Heart left ventricle (tissue), 16 donors: ENCODE measurements at regions of chr10 and their contacts with region 1.

Region 1: DNA sequence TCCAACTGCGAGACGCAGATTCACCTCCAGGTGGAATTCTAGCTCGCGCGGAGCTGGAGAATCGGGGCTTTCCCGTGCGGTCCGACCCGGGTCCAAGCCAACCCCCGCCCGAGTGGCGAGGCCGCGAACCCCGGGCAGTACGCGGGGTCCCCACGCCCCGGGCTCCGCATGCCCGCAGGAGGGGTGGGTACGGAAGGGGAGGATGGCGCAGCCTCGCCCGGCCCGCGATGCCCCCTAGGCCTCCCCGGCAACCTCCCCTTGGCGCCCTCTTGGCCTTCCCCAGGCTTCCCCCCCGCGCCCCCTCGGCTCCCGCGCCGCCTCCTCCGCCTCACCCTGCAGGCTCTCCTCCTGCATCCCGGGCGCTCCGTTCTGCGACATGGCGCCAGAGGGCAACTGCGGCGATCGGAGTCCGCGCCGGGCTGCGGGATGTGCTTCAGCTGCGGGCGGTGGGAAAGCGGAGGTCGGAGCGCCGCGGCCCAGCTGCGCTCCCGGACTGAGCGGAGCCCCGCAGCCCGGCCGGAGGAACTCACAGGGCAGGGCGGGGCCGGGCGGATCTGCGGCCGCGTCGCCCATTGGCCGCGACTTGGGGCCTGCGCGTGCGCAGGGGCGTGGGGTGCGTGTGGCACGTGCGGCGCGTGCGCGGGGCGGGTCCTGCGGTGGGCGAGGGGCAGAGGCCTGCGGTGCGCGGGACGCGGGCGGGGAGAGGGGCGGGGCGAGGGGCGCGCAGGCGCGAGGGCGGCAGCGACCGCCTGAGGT is at the start of gene BNIP3:
- DNase-seq: peak; percentile 95 to 99 (median 96)
- ATAC-seq: peak; percentile 89 to 95 (median 92)
- H3K4me3 ChIP-seq: peak within 1 kb of the TSS; percentile 72 to 99 (median 90)
- H3K27ac ChIP-seq: peak within 1 kb of the TSS; percentile 6 to 90 (median 80)
- H3K4me1 ChIP-seq: peaks cover 0 to 51% (median 28%) of the 10 kb centered on the region in 12 donors
- H3K27me3 ChIP-seq: peaks cover 0 to 9% (median 0%) of the 10 kb centered on the region in 9 donors
- CTCF ChIP-seq: peak in 1 of 12 donors; percentile 14
- POLR2A ChIP-seq: peak; percentile 95 to 99
- total RNA-seq, gene BNIP3: 97.1 to 711 (median 130) TPM

Region 2: DNA sequence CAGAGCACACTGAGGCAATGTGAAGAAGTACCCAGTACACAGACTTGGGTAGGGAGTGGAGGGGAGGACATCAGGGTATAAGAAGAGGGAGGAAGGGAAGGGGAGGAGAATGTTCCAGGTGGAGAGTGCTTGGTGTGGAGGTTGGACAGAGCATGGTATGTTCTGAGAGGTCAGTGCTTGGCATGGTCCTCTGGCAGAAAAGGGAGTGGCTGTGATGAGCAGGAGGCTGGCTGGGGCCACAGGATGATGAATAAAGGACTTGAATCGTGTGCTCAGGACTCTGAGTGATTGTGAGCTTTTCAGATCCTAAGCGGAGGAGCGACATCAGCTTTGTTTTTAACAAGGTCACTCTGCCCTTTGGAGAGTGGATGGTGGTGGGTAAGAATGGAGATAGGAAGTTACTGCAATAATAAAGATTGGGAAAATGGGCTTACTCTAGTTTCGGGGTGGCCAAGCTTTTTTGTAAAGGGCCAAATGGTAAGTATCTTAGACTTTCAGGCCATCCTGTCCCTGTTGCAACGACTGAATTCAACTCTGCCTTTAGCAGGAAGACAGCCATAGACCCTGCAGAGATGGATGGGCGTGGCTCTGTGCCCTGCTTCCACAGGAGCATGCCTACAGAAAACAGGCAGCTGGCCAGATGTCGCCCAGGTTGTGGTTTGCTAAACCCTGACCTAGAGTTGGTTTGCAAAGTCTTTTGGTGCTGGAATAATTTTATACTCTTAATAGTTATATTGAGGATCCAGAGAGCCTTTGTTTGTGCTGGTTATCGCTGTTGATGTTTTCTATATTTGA is 72.4 kb before region 1 on chr10:
- intact Hi-C with region 1: loop called in 6 of 10 experiments (anchors 5 to 10 kb)
- DNase-seq: no peak
- ATAC-seq: peak in 3 of 4 donors; percentile 33 to 38 (median 34)
- H3K4me3 ChIP-seq: no peak overlapping the region
- H3K27ac ChIP-seq: no peak overlapping the region
- H3K4me1 ChIP-seq: peaks cover 0 to 79% (median 48%) of the 10 kb centered on the region in 12 donors
- H3K27me3 ChIP-seq: no peaks in the 10 kb centered on the region
- CTCF ChIP-seq: no peak
- POLR2A ChIP-seq: no peak

Region 3: GRCh38 chr10:131997366-131998049 is 15.9 kb after region 1 on chr10:
- intact Hi-C with region 1: loop called in 1 of 10 experiments (anchors 2 kb)
- DNase-seq: peak in 2 of 5 donors; percentile 72 to 77
- ATAC-seq: peak; percentile 40 to 76 (median 57)
- H3K4me3 ChIP-seq: no peak overlapping the region
- H3K27ac ChIP-seq: peak overlapping the region; percentile 20 to 90 (median 69)
- H3K4me1 ChIP-seq: peaks cover 0 to 43% (median 22%) of the 10 kb centered on the region in 12 donors
- H3K27me3 ChIP-seq: no peaks in the 10 kb centered on the region
- CTCF ChIP-seq: no peak
- POLR2A ChIP-seq: no peak

Region 4: DNA sequence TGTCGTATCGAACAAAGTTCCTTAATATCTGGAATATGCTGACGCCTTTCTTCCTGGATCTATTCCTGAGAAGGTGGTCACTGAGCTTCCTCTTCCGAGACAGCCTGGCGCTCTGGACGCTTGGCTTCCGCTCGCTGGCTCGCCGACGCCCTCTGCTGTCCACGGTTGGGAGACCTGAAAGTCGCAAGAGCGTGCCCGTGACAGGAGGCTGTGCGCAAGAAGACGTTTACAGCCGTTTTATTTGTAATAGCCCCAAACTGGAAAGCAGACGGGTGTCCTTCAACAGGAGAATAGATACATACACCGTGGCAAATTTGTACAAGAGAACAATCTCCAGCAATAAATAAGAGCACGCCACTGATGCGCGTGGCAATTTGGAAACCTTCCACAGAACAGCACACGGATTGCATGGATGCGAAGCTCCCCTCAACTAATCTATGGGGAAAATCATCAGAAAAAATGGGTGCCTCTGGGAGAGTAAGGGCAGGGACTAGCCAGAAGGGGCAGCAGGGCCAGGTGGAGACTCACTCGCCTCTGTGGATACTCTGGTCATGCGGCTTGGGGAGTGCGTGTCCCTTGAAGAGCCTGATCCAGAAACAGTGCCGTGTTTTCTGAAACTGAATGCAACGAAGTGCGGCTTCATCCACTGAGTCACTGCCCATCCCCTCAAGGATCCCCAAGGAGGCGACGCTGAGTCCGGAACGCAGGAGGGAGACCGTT is 41.6 kb after region 1 on chr10:
- intact Hi-C with region 1: loop called in 3 of 10 experiments (anchors 2 to 5 kb)
- DNase-seq: peak; percentile 74 to 90 (median 80)
- ATAC-seq: peak; percentile 75 to 97 (median 87)
- H3K4me3 ChIP-seq: peak overlapping the region in 11 of 12 donors; percentile 9 to 53 (median 36)
- H3K27ac ChIP-seq: no peak overlapping the region
- H3K4me1 ChIP-seq: peaks cover 0 to 11% (median 4%) of the 10 kb centered on the region in 12 donors
- H3K27me3 ChIP-seq: peaks cover 0 to 27% (median 4%) of the 10 kb centered on the region in 9 donors
- CTCF ChIP-seq: peak; percentile 85 to 98 (median 90)
- POLR2A ChIP-seq: no peak

Region 5: DNA sequence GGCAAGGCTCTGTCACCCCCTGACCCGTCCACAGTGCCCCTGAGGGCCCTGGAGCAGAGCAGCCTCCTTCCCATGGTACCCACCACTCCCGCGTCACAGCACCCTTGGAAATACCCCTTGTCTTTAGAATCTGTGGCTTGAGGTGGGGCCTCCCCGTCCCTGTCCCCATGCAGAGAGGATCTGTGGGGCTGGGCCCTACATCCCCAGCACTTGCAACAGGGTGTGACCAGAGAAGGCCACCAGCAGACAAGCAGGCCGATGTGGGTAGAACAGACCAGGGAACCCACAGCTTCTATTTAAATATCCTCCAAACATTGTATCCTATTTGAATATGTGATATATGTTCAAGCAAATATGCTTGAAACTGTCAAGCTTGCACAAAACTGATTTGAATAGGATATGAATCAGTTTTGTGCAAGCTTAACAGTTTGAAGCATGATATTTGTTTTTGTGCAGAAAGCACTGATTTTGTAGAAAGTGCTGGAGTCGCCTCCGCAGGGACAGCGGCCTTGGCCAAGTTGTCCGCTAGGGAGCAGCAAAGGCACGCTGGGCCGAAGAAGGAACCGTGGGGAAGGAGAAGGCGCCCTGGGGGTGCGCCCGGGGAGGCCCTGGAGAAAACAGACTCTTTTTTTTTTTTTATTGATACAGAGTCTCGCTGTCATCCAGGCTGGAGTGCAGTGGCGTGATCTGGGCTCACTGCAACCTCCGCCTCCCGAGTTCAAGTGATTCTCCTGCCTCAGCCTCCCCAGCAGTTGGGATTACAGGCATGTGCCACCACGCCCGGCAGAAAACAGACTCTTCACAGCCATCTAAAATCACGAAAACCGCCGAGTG is 958.6 kb after region 1 on chr10:
- intact Hi-C with region 1: no loop called
- DNase-seq: peak in 2 of 5 donors; percentile 54 to 62
- ATAC-seq: peak in 2 of 4 donors; percentile 42 to 53
- H3K4me3 ChIP-seq: no peak overlapping the region
- H3K27ac ChIP-seq: no peak overlapping the region
- H3K4me1 ChIP-seq: peaks cover 0 to 20% (median 8%) of the 10 kb centered on the region in 12 donors
- H3K27me3 ChIP-seq: peaks cover 0 to 42% (median 18%) of the 10 kb centered on the region in 9 donors
- CTCF ChIP-seq: peak; percentile 51 to 81 (median 66)
- POLR2A ChIP-seq: no peak